Heart right ventricle (tissue), 16 donors: ENCODE measurements at regions of chr5 and their contacts with region 1.

Region 1: GRCh38 chr5:10145923-10146401 is 103.7 kb downstream of the ATPSCKMT start:
- DNase-seq: no peak
- ATAC-seq: peak in 1 of 8 donors; percentile 53
- H3K4me3 ChIP-seq: no peak overlapping the region
- H3K27ac ChIP-seq: no peak overlapping the region
- H3K4me1 ChIP-seq: no peaks in the 10 kb centered on the region
- H3K27me3 ChIP-seq: peaks cover 0 to 2% (median 0%) of the 10 kb centered on the region in 7 donors
- CTCF ChIP-seq: peak in 6 of 9 donors; percentile 23 to 48 (median 26)

Region 2: DNA sequence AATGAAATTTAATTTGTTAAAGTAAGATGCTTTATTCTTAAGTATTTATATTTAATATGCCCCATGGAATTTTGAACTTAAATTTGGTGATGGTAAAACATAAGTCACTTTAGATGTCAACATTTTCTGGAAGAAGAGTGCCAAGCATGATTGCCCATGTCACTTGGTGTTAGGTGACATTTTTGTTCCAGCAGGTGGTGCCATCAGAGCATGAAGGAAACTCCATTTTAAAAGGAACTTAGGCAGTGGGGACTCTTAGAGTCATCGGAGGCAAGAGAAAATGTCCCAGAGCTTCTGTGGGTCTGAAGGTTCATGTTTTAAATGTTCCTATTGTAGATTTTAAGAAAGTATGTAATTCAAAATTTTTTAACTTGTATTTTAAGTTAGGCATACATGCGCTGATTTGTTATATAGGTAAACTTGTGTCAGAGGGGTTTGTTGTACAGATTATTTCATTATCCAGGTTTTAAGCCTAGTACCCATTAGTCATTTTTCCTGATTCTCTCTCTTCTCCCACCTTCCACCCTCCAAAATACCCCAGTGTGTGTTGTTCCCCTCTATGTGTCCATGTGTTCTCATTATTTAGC is 1389.4 kb before region 1 on chr5:
- intact Hi-C with region 1: loop called in 1 of 10 experiments (anchors 10 kb)
- DNase-seq: no peak
- ATAC-seq: peak in 1 of 8 donors; percentile 47
- H3K4me3 ChIP-seq: no peak overlapping the region
- H3K27ac ChIP-seq: no peak overlapping the region
- H3K4me1 ChIP-seq: no peaks in the 10 kb centered on the region
- H3K27me3 ChIP-seq: peaks cover 0 to 5% (median 0%) of the 10 kb centered on the region in 7 donors
- CTCF ChIP-seq: peak in 8 of 9 donors; percentile 10 to 55 (median 41)

Region 3: DNA sequence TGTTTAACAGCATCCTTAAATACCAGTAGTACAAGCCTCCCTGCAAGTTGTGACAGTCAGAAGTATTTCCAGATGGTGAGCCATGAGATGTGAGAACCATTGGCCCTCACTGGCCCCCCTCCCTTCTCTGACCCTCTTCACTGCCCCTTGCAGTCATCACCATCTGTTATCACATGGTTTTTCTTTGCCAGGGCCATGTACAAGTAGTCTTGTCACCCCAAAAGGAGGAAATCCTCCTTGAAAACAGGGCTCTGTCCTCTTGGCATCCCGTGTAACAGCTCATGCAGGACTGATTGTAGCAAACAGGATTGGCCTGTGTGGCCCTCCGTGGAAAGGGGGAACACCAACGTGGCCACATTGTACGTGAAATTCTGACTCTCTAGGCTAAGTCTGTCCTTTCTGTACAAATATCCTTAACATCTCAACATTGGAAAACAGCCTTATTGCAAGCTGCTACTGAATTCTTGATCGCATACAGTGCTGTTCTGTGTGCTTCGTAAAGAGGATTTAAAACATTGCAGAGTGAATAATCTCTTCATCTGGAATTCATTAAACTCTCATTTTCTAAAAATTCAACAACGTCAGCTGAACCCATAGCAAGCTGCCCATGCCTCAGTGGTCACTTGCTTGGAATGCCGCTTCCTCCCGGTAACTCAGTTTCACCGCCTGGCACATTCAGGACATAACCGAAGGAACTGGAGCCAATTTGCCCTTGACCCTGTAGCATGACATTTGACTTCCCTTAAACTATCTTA is 68.0 kb before region 1 on chr5:
- intact Hi-C with region 1: no loop called
- DNase-seq: no peak
- ATAC-seq: no peak
- H3K4me3 ChIP-seq: no peak overlapping the region
- H3K27ac ChIP-seq: no peak overlapping the region
- H3K4me1 ChIP-seq: no peaks in the 10 kb centered on the region
- H3K27me3 ChIP-seq: peaks cover 0 to 5% (median 0%) of the 10 kb centered on the region in 7 donors
- CTCF ChIP-seq: no peak

Region 4: GRCh38 chr5:11143456-11144267 is 997.7 kb after region 1 on chr5:
- intact Hi-C with region 1: no loop called
- DNase-seq: no peak
- ATAC-seq: no peak
- H3K4me3 ChIP-seq: no peak overlapping the region
- H3K27ac ChIP-seq: no peak overlapping the region
- H3K4me1 ChIP-seq: no peaks in the 10 kb centered on the region
- H3K27me3 ChIP-seq: no peaks in the 10 kb centered on the region
- CTCF ChIP-seq: no peak